ENCODE measurements at regions of chr3 and their contacts with region 1.

Region 1: DNA sequence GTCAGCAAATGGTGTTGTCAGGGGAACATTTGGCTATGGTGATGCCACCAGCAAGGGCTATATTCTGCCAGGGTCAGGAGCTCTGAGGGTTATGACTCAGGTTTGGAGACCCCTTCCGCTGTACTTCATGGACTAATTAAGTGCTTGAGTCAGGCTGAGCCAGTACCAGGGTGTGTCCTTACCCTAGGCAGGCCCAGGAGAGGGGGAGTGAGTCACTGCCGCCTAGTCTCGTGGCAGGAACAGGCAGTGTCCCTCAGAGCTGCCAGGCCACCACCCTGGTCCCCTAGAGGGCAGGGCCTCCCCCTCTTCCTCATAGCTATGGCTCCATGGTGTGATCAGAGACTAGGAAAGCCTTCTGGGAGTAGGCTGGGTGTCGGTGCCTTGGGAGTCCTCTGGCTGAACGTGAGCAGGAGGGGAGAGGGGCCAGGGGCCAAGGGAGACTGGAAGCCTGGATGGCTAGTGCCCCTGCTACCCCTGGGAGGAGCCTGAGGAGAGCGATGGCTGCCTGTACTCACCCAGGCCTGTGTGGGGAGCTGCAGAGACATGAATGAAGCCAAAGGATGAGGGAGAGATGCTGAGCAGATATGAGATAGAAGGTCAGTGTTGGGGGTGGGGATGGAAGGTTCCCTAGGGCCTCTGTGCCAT is 10.6 kb downstream of the MAPKAPK3 start:
- DNase-seq: peak; percentile 51
- ATAC-seq: peak; percentile 38
- H3K4me3 Mint-ChIP-seq: no peak overlapping the region
- H3K27ac Mint-ChIP-seq: peak overlapping the region; percentile 83
- H3K4me1 Mint-ChIP-seq: peaks cover 95% of the 10 kb centered on the region
- H3K27me3 Mint-ChIP-seq: no peaks in the 10 kb centered on the region
- CTCF ChIP-seq: peak; percentile 34

Region 2: GRCh38 chr3:50264370-50264963 is 363.1 kb before region 1 on chr3:
- CTCF ChIA-PET with region 1: no interaction called
- POLR2A ChIA-PET with region 1: no interaction called
- intact Hi-C with region 1: no loop called
- DNase-seq: no peak
- ATAC-seq: no peak
- H3K4me3 Mint-ChIP-seq: no peak overlapping the region
- H3K27ac Mint-ChIP-seq: no peak overlapping the region
- H3K4me1 Mint-ChIP-seq: peaks cover 4% of the 10 kb centered on the region
- H3K27me3 Mint-ChIP-seq: peaks cover 15% of the 10 kb centered on the region
- CTCF ChIP-seq: no peak

Region 3: DNA sequence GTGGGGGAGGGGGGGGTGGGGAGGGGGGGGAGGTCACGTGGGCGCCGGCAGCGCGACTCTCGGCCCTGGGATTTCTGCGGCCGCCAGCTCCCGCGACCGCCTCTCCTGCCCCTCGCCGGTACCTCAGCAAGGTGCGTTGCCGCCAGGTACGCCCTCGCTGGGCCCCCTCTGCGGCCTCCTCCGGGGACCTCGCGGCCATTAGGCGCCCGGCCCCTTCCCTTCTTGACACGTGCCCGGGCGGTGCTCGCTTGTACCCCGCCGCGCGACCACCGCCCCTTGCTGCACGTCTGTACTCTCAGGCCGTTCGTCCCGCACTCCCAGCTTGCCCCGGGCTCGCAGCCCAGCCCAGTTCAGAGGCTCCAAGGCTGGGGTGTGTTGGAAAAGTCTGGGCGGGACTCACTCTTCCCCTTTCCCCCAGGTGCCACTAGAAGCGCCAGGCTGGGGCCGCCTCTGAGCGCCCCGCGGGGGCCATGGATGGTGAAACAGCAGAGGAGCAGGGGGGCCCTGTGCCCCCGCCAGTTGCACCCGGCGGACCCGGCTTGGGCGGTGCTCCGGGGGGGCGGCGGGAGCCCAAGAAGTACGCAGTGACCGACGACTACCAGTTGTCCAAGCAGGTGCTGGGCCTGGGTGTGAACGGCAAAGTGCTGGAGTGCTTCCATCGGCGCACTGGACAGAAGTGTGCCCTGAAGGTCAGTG is 10.3 kb before region 1 on chr3 and contains the start of gene MAPKAPK3:
- CTCF ChIA-PET with region 1: interaction called, 67 read pairs
- POLR2A ChIA-PET with region 1: interaction called, 30 read pairs
- intact Hi-C with region 1: no loop called
- DNase-seq: peak; percentile 52
- ATAC-seq: peak; percentile 0
- H3K4me3 Mint-ChIP-seq: peak within 1 kb of the TSS; percentile 94
- H3K27ac Mint-ChIP-seq: peak within 1 kb of the TSS; percentile 94
- H3K4me1 Mint-ChIP-seq: peaks cover 49% of the 10 kb centered on the region
- H3K27me3 Mint-ChIP-seq: no peaks in the 10 kb centered on the region
- CTCF ChIP-seq: no peak
- total RNA-seq, gene MAPKAPK3: 204 to 205 TPM

Region 4: DNA sequence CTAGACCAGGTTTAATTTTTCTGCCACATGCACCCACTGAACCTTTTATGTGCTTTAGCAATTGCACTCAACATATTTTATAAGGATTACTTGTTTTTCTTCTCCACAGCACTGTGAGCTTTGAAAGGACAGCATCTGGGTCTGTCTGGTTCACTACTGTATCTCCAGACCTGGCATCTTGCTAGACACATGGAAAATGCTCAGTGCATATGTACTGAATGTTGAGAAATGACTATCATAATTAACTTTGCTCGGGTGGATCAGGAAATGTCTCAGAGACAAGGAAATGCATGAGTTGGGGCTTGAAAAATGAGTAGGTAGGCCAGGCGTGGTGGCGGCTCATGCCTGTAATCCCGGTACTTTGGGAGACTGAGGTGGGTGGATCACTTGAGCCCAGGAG is 87.4 kb after region 1 on chr3:
- CTCF ChIA-PET with region 1: no interaction called
- POLR2A ChIA-PET with region 1: no interaction called
- intact Hi-C with region 1: no loop called
- DNase-seq: no peak
- ATAC-seq: no peak
- H3K4me3 Mint-ChIP-seq: no peak overlapping the region
- H3K27ac Mint-ChIP-seq: no peak overlapping the region
- H3K4me1 Mint-ChIP-seq: no peaks in the 10 kb centered on the region
- H3K27me3 Mint-ChIP-seq: no peaks in the 10 kb centered on the region
- CTCF ChIP-seq: no peak

Region 5: GRCh38 chr3:50749822-50750221 is 122.3 kb after region 1 on chr3:
- CTCF ChIA-PET with region 1: no interaction called
- POLR2A ChIA-PET with region 1: no interaction called
- intact Hi-C with region 1: no loop called
- DNase-seq: no peak
- ATAC-seq: no peak
- H3K4me3 Mint-ChIP-seq: no peak overlapping the region
- H3K27ac Mint-ChIP-seq: no peak overlapping the region
- H3K4me1 Mint-ChIP-seq: peaks cover 9% of the 10 kb centered on the region
- H3K27me3 Mint-ChIP-seq: no peaks in the 10 kb centered on the region
- CTCF ChIP-seq: no peak

Region 6: DNA sequence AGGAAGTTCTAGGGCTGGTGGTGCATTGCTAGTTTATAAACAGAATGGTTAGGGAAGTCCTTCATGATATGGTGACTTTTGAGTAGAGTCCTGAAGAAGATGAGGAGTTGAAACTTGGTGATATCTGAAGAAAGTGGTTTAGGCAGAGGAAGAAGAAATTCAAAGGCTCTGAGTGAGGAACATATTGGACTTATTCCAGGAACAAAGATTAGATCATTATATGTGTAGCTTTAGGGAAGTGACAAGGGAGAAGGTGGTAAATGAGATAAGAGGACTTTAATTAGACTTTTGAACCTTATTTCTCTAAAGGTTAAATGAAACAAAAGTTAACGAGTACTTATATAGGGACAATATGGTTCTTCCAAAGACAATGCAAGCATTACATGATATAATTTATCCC is 333.9 kb after region 1 on chr3:
- CTCF ChIA-PET with region 1: no interaction called
- POLR2A ChIA-PET with region 1: no interaction called
- intact Hi-C with region 1: no loop called
- DNase-seq: no peak
- ATAC-seq: no peak
- H3K4me3 Mint-ChIP-seq: no peak overlapping the region
- H3K27ac Mint-ChIP-seq: no peak overlapping the region
- H3K4me1 Mint-ChIP-seq: no peaks in the 10 kb centered on the region
- H3K27me3 Mint-ChIP-seq: peaks cover 9% of the 10 kb centered on the region
- CTCF ChIP-seq: no peak

Measured in activated CD8-positive, alpha-beta T cell treated with anti-CD3 and anti-CD28 coated beads for 36 hours (primary cell).